ENCODE measurements at regions of chr19 and their contacts with region 1.

Region 1: DNA sequence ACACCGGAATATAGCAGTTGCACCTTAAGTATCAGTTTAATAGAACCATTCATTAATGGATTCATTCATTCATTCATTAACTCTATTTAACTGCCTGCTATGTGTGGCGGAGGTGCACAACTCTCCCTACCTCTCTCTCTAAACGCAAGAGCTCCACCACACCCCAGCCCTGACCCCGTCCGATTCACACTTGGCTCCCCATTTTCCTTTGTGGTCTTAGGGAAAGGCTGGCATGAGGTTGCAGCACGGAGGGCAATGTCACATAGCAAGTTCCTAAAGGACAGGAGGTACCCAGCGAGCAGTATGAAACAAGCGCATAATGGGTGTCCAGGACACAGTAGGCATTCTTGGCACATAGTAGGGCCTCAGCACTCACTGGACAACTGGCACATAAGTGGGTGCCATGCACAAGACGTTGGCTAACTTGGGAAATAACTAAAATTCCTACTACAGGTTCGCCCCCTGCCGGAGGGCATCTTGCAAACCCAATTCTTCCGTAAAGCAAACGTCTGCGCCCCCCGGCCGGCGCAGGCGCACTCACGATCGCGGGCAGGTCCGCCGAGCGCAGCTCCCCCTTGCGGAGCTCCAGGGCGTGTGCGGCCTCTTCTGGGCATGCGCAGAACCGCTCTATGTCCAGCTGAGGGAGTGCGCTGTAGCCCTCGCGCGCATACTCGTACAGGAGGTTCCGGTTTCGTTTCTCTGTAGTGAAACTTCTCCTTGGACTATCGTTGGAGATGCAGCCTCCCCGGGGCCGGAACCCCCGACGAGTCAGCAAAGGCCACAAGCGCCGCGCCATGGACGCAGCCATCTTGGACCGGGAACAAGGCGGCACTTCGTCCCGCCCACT is at the start of gene SARS2:
- H3K4me3 Mint-ChIP-seq: peak within 1 kb of the TSS; percentile 91
- H3K27ac Mint-ChIP-seq: peak within 1 kb of the TSS; percentile 94
- H3K4me1 Mint-ChIP-seq: peaks cover 39% of the 10 kb centered on the region
- H3K27me3 Mint-ChIP-seq: no peaks in the 10 kb centered on the region

Region 2: DNA sequence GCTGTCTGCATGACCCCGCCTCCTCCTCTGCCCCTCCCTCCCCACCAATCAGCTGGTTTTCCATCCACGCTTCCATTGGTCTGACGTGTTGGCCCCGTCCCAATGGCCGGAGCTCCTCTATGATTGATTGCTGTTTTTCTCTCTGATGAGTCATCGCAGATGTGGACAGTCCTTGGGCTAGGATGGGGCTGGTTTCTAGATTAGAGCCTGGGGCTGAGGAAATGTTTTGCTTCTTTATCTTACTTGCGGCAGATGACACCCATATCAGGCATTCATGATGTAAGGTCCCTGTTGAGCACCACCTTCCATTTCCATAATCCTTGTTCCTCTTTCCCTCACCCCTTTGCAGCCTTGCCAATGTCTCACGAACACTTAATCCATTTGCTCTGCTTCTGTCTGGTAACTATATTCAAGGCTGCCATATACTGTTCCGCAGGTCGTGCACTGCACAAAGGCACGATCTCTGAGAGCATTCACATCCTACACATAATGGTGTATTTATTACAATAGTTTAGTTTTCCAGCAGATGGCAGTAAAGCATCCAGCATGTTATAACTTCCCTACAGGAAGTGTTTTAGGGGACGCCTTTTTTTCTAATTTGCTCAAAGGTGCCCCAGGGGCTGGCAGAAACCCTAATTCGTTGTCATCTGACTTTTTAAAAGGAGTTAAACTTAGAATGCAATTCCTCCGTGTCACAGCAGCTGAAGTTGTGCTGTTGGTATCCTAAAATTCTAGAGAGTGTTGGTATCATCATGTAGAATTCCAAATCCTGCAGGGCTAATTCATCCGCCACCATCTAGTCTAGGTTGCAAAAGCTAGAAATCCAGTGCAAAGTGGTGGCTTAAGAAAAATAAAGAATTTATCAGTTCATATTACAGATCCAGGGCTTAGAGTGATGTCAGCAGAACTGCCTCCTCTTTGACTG is 385.9 kb before region 1 on chr19:
- intact Hi-C with region 1: loop called (anchors 10 kb)
- H3K4me3 Mint-ChIP-seq: peak overlapping the region; percentile 62
- H3K27ac Mint-ChIP-seq: peak overlapping the region; percentile 29
- H3K4me1 Mint-ChIP-seq: peaks cover 29% of the 10 kb centered on the region
- H3K27me3 Mint-ChIP-seq: peaks cover 12% of the 10 kb centered on the region

Region 3: GRCh38 chr19:38729653-38730469 is 200.3 kb before region 1 on chr19:
- intact Hi-C with region 1: loop called (anchors 5 kb)
- H3K4me3 Mint-ChIP-seq: no peak overlapping the region
- H3K27ac Mint-ChIP-seq: no peak overlapping the region
- H3K4me1 Mint-ChIP-seq: peaks cover 36% of the 10 kb centered on the region
- H3K27me3 Mint-ChIP-seq: no peaks in the 10 kb centered on the region

Region 4: GRCh38 chr19:38805180-38805579 is 125.0 kb before region 1 on chr19:
- intact Hi-C with region 1: no loop called
- H3K4me3 Mint-ChIP-seq: no peak overlapping the region
- H3K27ac Mint-ChIP-seq: no peak overlapping the region
- H3K4me1 Mint-ChIP-seq: peaks cover 5% of the 10 kb centered on the region
- H3K27me3 Mint-ChIP-seq: no peaks in the 10 kb centered on the region

Region 5: GRCh38 chr19:38899447-38900219 is 30.5 kb before region 1 on chr19 and contains the starts of genes NFKBIB and SIRT2:
- intact Hi-C with region 1: loop called (anchors 1 kb)
- H3K4me3 Mint-ChIP-seq: peak within 1 kb of the TSS; percentile 90
- H3K27ac Mint-ChIP-seq: peak within 1 kb of the TSS; percentile 89
- H3K4me1 Mint-ChIP-seq: peaks cover 43% of the 10 kb centered on the region
- H3K27me3 Mint-ChIP-seq: no peaks in the 10 kb centered on the region